Esophagus muscularis mucosa (tissue), 4 donors: ENCODE measurements at regions of chr7 and their contacts with region 1.

Region 1: DNA sequence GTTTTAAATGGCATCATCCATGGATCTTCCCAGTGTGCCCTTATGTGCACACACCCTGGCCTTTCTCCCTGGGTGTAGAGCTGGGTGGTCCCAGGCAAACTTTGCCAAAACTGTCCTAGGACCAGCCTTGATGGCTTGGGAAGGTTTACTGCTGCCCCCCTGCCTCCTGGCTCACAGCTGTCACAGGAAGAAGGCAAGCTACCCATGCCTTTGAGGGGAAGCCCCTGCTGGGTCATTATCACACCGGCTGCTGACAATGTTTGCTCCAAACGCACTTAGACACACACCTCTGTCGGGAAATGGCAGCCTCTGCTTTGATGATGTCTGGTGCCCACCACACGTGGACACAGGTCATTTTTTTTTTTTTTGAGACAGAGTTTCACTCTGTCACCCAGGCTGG is 25.2 kb upstream of the FIGNL1 start:
- DNase-seq: peak; percentile 79
- H3K4me3 ChIP-seq: no peak overlapping the region
- H3K27ac ChIP-seq: no peak overlapping the region
- H3K4me1 ChIP-seq: no peaks in the 10 kb centered on the region
- H3K27me3 ChIP-seq: peaks cover 0 to 14% (median 0%) of the 10 kb centered on the region in 4 donors
- CTCF ChIP-seq: no peak
- EP300 ChIP-seq: no peak
- POLR2A ChIP-seq: no peak

Region 2: DNA sequence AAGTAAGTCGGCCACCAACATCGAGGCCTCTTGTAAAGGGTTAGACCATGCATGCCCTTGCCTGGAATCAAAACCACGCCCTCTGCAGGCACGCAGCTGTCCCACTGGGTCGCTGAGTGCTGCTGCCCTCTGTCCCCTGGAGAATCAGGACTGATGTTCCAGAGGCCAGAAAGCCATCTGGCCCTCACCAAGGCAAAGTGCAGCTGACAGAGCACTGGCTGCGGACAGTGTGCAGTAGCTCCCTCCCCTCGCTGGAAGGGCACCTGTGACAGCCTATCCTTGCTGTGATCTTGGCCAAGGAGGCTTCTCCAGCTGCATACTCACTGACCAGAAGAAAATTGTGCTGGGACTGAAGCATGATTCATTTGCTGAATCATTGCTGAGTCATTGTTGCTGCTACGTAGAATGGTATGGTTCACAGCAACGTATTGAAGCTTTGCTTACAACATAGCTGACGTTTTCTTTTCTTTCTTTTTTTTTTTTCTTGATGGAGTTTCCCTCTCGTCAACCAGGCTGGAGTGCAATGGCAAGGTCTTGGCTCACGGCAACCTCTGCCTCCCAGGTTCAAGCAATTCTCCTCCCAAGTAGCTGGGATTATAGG is 59.5 kb after region 1 on chr7:
- intact Hi-C with region 1: loop called (anchors 10 kb)
- DNase-seq: peak; percentile 72
- H3K4me3 ChIP-seq: no peak overlapping the region
- H3K27ac ChIP-seq: no peak overlapping the region
- H3K4me1 ChIP-seq: peaks cover 0 to 8% (median 2%) of the 10 kb centered on the region in 4 donors
- H3K27me3 ChIP-seq: peaks cover 0 to 15% (median 0%) of the 10 kb centered on the region in 4 donors
- CTCF ChIP-seq: no peak
- EP300 ChIP-seq: no peak
- POLR2A ChIP-seq: no peak

Region 3: GRCh38 chr7:50608196-50608906 is 133.0 kb after region 1 on chr7:
- intact Hi-C with region 1: loop called (anchors 10 kb)
- DNase-seq: no peak
- H3K4me3 ChIP-seq: no peak overlapping the region
- H3K27ac ChIP-seq: no peak overlapping the region
- H3K4me1 ChIP-seq: no peaks in the 10 kb centered on the region
- H3K27me3 ChIP-seq: no peaks in the 10 kb centered on the region
- CTCF ChIP-seq: no peak
- EP300 ChIP-seq: no peak
- POLR2A ChIP-seq: no peak

Region 4: DNA sequence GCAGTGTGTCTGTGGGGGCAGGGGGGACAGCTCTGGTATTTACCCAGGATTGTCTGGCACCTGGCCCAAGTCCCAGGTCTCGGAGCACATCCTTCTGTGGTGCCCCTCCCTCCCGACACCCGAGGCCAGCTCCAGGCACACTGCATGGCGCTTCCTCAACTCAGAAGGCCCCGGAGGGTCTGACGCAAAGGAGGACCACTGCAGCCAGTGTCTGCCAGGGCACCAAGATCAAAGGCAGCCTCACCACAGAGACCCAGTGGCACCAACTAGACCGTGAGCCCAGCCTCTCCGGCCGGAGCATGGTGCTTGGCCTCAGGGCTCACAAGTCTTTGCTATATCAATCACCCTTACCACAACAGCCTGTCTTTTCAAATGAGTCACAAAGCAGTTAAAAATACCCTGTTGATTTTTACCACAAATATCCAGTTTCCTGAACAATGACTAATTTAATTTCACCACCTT is 189.2 kb after region 1 on chr7:
- intact Hi-C with region 1: no loop called
- DNase-seq: no peak
- H3K4me3 ChIP-seq: no peak overlapping the region
- H3K27ac ChIP-seq: peak overlapping the region in 2 of 4 donors; percentile 7 to 24
- H3K4me1 ChIP-seq: peaks cover 80 to 86% (median 82%) of the 10 kb centered on the region in 4 donors
- H3K27me3 ChIP-seq: no peaks in the 10 kb centered on the region
- CTCF ChIP-seq: no peak
- EP300 ChIP-seq: no peak
- POLR2A ChIP-seq: peak; percentile 20

Region 5: DNA sequence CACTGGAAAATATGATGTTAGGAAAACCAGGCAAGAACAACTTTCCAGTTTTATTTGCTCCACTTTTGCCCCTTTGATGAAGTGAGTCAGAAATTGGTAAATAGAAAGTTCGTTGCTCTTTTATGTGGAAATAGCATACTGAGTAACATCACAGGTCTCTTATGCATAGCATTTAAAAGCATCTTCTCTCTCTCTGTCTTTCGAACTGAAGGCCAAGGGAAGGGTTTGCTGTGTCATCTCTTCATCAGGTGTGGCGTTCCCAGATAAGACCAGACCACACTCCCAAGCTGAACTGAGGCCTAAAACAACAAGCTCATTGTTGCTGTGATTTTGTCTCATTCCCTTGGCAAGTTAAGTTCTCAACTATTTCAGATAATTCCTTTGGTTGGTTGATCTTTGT is 439.1 kb after region 1 on chr7:
- intact Hi-C with region 1: no loop called
- DNase-seq: no peak
- H3K4me3 ChIP-seq: no peak overlapping the region
- H3K27ac ChIP-seq: no peak overlapping the region
- H3K4me1 ChIP-seq: no peaks in the 10 kb centered on the region
- H3K27me3 ChIP-seq: no peaks in the 10 kb centered on the region
- CTCF ChIP-seq: no peak
- EP300 ChIP-seq: no peak
- POLR2A ChIP-seq: no peak